Aorta (tissue), 5 donors: ENCODE measurements at regions of chr2 and their contacts with region 1.

Region 1: DNA sequence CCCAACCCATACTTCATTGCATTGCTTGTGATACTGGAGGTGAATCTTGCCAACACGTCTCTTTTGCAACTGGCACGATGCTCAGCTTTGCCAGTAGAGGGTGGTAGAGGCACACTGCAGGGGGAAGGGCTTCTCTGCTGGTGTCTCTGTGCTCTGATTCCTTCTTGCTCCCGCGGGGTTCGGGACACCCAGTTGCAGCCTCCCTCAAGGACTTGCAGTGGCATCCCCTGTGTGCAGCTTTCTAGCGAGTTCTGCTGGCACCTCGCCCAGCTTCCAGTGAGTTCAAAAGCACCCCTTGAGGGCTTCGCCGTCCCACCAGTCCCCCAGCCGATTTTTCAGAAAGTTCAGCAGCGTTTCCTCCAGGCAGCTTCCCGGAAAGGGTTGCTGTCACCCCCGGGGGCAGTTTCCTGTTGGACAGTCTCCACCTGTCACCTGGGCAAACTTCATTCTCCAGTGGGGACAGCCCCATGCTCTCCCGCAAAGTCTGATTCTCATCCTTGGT is 35.3 kb upstream of the EN1 start:
- DNase-seq: peak; percentile 71 to 76
- ATAC-seq: peak; percentile 76
- H3K4me3 ChIP-seq: no peak overlapping the region
- H3K27ac ChIP-seq: no peak overlapping the region
- H3K4me1 ChIP-seq: no peaks in the 10 kb centered on the region
- H3K27me3 ChIP-seq: peaks cover 0 to 4% of the 10 kb centered on the region in 2 donors

Region 2: GRCh38 chr2:118417406-118418120 is 465.2 kb before region 1 on chr2:
- intact Hi-C with region 1: no loop called
- DNase-seq: no peak
- ATAC-seq: no peak
- H3K4me3 ChIP-seq: no peak overlapping the region
- H3K27ac ChIP-seq: no peak overlapping the region
- H3K4me1 ChIP-seq: no peaks in the 10 kb centered on the region
- H3K27me3 ChIP-seq: no peaks in the 10 kb centered on the region

Region 3: DNA sequence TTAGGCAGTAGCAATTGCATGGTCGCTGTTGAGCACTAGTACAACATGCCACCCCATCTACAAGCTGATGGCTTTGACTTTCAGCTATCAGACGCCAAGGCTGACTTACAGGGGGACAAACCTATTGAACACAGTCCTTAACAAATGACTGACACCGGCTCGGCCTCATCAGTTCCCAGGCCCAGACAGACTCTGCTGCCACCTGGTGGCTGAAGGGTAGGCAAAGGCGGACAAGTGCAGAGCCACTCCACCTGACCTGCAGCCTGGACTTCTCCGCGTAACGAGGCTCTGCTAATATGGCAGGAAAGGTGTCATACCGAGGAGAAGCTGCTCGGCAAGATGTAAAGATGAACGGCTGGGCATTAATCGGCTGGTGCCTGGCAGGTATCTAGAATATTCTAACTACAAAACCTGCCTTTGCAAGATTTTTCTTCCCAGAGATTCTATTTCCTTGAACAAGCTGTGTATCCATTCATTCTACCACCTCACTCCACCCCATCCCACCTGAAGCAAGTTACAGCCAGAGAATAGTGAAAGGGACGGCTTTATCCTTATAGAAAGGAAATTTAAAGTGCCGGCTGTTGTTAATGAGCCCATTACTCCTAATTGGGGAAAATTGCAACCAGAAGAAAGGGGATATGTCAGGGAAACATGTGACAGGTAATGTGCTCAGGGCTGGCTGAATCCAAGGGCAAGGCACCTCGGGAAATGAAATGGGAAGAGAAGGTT is 408.3 kb after region 1 on chr2:
- intact Hi-C with region 1: loop called (anchors 2 to 5 kb)
- DNase-seq: peak; percentile 82 to 95
- ATAC-seq: no peak
- H3K4me3 ChIP-seq: no peak overlapping the region
- H3K27ac ChIP-seq: no peak overlapping the region
- H3K4me1 ChIP-seq: no peaks in the 10 kb centered on the region
- H3K27me3 ChIP-seq: no peaks in the 10 kb centered on the region